MCF 10A (cell line): ENCODE measurements at regions of chr16 and their contacts with region 1.

Region 1: DNA sequence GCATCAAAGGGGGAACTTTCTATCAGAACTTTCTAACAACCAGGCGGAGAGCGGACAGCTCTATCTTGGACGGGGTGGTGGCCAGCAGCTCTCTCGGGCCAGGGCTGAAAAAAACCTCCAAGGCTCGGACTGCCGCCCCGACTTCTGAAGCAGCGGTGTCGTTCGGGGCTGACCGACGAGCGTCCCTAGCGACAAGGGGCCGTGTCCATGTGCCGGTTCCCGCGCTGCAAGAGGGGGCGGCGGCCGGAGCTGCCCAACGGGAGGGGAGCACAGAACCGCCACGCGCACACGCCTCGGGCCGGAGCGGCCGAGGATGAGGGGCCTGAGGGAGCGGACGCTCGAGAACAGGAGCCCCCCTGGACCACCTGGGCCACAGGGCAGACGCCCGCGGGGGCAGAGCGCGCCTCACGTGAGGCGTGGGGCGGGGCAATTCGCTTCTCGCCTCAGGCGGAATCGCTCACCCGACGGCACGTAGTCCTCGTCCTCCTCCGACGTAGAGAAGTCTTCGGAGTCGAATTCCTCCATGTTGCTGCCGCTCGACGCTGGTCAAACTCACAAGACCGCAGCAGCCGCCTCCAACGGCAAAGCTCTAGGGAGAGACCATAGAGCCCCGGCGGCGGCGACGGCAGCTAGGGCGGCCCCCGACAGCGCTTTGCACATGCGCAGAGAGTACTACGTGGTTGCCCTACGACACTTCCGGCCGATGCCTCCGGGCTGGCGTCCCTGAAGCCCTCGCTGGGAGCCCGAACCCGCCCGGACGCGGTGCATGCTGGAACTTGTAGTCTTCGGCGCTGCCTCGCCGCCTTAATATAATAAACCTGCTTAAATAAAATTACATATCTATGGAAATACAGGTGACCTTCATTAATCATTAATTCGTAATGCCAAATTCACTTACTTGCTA is at the start of gene CFDP1:
- DNase-seq: peak; percentile 95
- H3K4me3 Mint-ChIP-seq: peak within 1 kb of the TSS; percentile 77
- H3K27ac Mint-ChIP-seq: peak within 1 kb of the TSS; percentile 86
- H3K4me1 Mint-ChIP-seq: peaks cover 13% of the 10 kb centered on the region
- H3K27me3 Mint-ChIP-seq: no peaks in the 10 kb centered on the region
- CTCF ChIP-seq: no peak
- total RNA-seq, gene CFDP1: 41.3 and 44.7 TPM in 2 replicates

Region 2: DNA sequence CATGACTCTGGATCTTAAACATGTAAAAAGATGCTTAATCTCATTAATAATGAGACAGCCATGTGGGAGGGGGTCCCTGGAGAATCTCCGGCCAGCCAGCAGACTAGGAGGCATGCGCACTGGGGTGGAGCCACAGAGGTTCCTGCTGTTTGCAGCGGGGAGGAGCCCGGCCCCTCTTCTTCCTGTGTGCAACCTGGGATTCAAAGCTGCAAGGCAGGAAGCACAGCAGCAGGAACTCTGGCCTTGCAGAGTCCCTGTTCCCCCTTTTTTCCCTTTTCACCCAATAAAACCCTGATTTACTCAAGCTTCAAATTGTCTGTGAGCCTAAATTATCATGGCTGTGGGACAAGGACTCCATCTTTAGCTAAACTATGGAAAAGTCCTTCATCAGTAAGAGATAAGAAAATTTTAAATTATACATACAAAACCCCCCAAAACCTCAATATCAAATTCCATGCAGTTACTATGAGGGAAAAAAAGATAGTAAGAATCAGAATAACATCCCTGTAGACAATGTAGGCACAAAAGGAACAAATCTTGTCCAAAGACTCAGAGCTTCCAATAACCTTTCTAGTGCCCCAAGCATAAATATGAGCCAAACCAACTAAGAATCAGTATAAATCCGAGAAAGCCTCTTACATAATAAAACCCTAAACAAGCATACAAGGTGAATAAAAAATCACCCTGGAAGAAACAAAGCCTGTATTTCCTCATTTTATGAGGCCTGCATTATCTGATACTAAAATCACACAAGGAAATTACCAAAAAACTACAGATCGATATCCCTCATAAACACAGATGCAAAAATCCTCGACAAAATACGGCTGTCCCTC is 11.9 kb before region 1 on chr16:
- CTCF ChIA-PET with region 1: interaction called, 3 read pairs
- POLR2A ChIA-PET with region 1: interaction called, 48 read pairs
- intact Hi-C with region 1: no loop called
- DNase-seq: peak; percentile 55
- H3K4me3 Mint-ChIP-seq: peak overlapping the region; percentile 69
- H3K27ac Mint-ChIP-seq: peak overlapping the region; percentile 83
- H3K4me1 Mint-ChIP-seq: peaks cover 20% of the 10 kb centered on the region
- H3K27me3 Mint-ChIP-seq: no peaks in the 10 kb centered on the region
- CTCF ChIP-seq: no peak

Region 3: GRCh38 chr16:75445298-75445697 is 12.2 kb after region 1 on chr16:
- CTCF ChIA-PET with region 1: interaction called, 3 read pairs
- POLR2A ChIA-PET with region 1: interaction called, 33 read pairs
- intact Hi-C with region 1: no loop called
- DNase-seq: no peak
- H3K4me3 Mint-ChIP-seq: no peak overlapping the region
- H3K27ac Mint-ChIP-seq: no peak overlapping the region
- H3K4me1 Mint-ChIP-seq: no peaks in the 10 kb centered on the region
- H3K27me3 Mint-ChIP-seq: no peaks in the 10 kb centered on the region
- CTCF ChIP-seq: no peak

Region 4: DNA sequence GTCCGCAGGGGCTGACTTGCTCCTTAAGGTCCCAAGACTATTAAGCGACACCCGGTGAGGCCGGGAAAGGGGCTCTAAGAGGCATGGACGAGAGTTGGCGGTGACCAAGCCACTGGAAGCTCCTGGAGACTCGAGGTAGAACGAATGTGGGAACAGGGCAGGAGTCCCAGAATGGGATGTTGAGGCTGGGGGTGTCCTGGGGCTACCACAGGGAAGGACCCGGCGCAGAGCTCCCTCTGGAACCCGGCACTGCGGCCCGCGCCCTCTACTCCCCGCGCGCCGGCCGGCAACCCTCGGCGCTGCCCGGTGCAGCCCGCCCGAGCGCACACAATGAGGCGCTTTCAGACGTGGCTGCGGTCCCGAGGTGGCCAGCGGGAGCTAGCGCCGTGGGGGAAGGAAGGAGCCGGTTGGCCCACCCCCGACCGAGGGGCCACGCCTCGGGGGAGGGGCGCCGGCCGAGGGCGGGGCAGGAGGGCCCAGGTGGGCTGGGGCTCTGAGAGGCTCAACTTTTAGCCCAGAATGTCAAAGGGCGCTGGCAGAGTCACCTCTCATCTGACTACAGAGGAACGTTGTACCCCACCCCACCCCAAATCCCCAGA is 62.1 kb after region 1 on chr16 and contains the start of gene CHST6:
- CTCF ChIA-PET with region 1: no interaction called
- POLR2A ChIA-PET with region 1: no interaction called
- intact Hi-C with region 1: no loop called
- DNase-seq: no peak
- H3K4me3 Mint-ChIP-seq: no peak within 1 kb of the TSS
- H3K27ac Mint-ChIP-seq: no peak within 1 kb of the TSS
- H3K4me1 Mint-ChIP-seq: no peaks in the 10 kb centered on the region
- H3K27me3 Mint-ChIP-seq: no peaks in the 10 kb centered on the region
- CTCF ChIP-seq: no peak
- total RNA-seq, gene CHST6: 0.16 and 0.42 TPM in 2 replicates